ENCODE measurements at regions of chr6 and their contacts with region 1.

Region 1: DNA sequence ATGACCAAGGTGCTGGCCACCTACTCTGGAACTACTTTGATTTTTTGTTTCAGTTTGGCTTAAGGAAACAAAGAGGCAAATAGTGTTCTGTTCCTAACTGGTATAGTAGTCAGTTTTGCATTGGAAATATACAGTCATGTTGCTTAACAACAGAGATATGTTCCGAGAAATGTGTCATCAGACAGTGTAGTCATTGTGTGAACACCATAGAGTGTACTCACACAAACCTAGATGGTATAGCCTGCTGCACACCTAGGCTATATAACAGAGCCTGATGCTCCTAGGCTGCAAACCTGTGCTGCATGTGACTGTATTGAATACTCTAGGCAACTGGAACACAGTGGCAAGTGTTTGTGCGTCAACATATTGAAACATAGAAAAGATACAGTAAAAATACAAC is 80.4 kb downstream of the ARID1B start:
- DNase-seq: no peak
- H3K4me3 Mint-ChIP-seq: no peak overlapping the region
- H3K27ac Mint-ChIP-seq: peak overlapping the region; percentile 74
- H3K4me1 Mint-ChIP-seq: peaks cover 49% of the 10 kb centered on the region
- H3K27me3 Mint-ChIP-seq: no peaks in the 10 kb centered on the region

Region 2: DNA sequence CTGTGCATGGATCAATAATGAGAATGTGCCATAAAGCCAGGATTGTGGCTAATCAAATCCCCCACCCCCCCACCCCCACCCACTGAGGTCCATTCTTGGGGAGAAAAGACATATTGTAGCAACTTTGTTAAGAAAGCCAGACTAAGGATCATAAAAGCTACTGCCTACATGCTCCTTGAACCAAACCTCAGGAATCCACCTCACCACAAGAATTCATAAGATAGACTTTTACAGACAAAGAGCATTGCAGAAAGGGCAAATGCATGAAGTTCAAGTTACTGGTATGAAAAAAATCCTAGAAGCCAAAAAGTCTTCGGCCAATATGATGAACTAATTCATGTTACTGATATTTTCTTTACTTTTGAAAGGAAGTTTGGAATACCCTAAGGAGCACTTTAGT is 268.3 kb before region 1 on chr6:
- intact Hi-C with region 1: no loop called
- DNase-seq: no peak
- H3K4me3 Mint-ChIP-seq: no peak overlapping the region
- H3K27ac Mint-ChIP-seq: no peak overlapping the region
- H3K4me1 Mint-ChIP-seq: no peaks in the 10 kb centered on the region
- H3K27me3 Mint-ChIP-seq: peaks cover 16% of the 10 kb centered on the region

Region 3: DNA sequence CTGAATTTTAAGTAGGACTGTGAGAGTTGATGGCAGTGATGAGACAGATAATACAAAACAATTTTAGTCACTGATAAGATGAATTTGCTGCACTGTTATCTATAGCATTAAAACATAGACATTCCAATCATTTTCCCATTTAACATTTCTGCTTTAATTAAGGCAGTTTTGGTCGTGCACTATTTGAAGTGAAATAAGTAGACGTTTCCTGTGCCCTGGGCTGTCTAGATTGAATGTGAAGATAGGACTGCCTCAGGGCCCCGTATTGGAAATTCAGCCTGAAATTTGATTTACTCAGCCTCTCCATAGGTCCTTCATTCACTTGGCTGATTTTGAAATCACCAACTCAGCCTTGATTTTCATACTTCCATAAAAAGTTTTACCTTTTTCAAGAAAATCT is 32.1 kb before region 1 on chr6:
- intact Hi-C with region 1: loop called (anchors 2 kb)
- DNase-seq: no peak
- H3K4me3 Mint-ChIP-seq: no peak overlapping the region
- H3K27ac Mint-ChIP-seq: no peak overlapping the region
- H3K4me1 Mint-ChIP-seq: peaks cover 29% of the 10 kb centered on the region
- H3K27me3 Mint-ChIP-seq: no peaks in the 10 kb centered on the region

Region 4: GRCh38 chr6:156925718-156926615 is 68.4 kb after region 1 on chr6:
- intact Hi-C with region 1: loop called (anchors 1 kb)
- DNase-seq: no peak
- H3K4me3 Mint-ChIP-seq: no peak overlapping the region
- H3K27ac Mint-ChIP-seq: peak overlapping the region; percentile 47
- H3K4me1 Mint-ChIP-seq: peaks cover 33% of the 10 kb centered on the region
- H3K27me3 Mint-ChIP-seq: no peaks in the 10 kb centered on the region

Region 5: DNA sequence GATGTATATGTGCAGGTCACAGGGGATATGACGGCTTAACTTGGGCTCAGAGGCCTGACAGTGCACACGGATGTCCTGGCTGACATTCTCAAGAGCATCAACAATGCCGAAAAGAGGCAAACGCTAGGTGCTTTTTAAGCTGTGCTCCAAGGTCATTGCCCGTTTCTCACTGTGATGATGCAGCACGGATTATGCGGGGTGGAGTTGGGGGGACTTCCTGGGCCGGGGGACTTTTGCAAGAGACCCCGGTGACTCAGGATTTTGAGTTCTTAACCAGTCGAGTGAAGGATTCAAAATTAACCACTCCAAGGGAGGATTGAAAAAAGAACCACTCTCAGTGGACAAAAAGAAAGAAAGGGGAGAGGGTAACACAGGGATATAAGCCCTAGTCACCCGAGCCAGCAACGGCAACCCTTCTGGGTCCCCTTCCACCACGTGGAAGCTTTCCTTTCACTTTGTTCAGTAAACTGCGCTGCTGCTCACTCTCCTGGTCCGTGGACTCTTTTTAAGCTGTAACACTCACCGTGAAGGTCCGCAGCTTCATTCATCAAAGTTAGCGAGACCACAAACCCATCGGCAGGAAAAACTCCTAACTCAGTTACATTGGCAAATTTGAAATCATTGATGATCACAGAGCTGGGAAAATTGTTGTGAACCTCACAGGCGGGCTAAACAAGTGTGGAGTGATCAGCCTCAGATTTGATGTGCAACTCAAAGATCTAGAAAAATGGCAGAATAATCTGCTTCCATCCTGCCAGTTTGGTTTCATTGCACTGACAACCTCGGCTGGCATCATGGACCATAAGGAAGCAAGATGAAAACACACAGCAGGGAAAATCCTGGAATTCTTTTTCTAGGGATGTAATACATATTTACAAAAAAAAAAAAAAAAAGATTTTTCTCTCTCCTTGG is 118.9 kb after region 1 on chr6:
- intact Hi-C with region 1: loop called (anchors 5 kb)
- DNase-seq: no peak
- H3K4me3 Mint-ChIP-seq: peak overlapping the region; percentile 74
- H3K27ac Mint-ChIP-seq: peak overlapping the region; percentile 83
- H3K4me1 Mint-ChIP-seq: peaks cover 50% of the 10 kb centered on the region
- H3K27me3 Mint-ChIP-seq: no peaks in the 10 kb centered on the region